AG04449 (cell line): ENCODE measurements at regions of chr12 and their contacts with region 1.

Region 1: DNA sequence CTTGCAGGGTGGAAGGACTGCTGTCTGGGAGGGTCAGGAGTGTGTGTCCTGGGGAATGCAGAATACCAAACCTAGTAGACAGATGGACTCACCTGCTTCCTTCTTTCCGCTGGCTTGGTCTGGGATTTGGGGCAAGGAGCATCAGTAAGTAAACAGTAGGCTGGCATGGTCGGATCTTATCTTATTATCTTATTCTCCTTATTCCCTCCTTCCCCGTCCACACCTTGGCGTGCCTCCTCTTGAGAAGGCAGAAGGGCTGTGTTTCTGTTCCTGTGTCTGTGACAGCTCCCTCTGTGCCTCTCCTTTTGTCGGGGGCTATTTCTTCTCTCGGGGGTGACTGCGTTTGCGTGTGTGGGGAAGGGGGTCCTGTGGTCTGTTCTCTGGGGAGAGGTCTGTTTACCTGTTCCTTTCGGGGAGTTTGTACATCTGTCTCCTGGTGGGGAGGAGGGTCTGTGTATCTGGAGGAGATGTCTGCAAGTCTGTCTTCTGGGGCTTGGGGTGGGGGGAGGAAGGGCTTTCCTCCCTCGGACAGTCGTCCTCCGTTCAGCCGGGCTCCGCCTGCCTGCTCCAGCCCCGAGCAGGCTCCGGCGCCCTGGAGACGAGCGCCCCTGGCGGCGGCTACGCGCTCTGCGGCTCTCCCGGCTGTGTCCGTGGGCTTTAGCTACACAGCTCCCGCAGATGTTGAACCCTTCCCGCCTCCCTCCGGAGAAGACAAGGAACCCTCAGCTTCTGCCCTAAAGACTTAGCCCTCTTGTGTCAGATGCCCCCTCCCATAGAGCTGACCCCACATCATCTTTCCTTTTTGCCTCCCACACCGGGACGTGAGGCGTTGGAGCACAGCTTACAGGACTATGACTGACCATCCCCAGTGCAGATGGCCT is 4.3 kb downstream of the KRT86 start:
- DNase-seq: no peak
- H3K4me3 ChIP-seq: peak overlapping the region; percentile 13; the same call in 1 of the 2 replicates
- CTCF ChIP-seq: peak; percentile 100

Region 2: DNA sequence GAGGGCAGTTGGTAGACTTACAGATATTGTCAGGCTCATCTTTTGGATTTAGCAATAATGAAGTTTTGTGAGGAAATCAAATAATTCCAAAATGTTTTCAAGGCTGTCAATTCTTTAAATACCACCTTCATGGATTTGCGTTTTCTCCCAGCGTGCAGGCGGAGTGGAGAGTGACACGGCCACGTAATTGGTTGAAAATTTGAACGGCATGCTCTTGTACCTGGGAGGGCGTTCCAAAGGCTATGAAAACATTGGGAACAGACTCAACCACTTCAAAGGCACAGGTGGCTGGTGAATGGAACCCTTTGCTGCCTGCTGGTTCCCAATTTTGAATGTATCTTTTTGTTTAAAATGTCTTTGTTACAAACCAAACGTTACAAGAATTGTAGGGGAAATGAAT is 186.9 kb before region 1 on chr12:
- CTCF ChIA-PET with region 1: no interaction called
- POLR2A ChIA-PET with region 1: no interaction called
- DNase-seq: no peak
- H3K4me3 ChIP-seq: no peak overlapping the region
- CTCF ChIP-seq: no peak

Region 3: DNA sequence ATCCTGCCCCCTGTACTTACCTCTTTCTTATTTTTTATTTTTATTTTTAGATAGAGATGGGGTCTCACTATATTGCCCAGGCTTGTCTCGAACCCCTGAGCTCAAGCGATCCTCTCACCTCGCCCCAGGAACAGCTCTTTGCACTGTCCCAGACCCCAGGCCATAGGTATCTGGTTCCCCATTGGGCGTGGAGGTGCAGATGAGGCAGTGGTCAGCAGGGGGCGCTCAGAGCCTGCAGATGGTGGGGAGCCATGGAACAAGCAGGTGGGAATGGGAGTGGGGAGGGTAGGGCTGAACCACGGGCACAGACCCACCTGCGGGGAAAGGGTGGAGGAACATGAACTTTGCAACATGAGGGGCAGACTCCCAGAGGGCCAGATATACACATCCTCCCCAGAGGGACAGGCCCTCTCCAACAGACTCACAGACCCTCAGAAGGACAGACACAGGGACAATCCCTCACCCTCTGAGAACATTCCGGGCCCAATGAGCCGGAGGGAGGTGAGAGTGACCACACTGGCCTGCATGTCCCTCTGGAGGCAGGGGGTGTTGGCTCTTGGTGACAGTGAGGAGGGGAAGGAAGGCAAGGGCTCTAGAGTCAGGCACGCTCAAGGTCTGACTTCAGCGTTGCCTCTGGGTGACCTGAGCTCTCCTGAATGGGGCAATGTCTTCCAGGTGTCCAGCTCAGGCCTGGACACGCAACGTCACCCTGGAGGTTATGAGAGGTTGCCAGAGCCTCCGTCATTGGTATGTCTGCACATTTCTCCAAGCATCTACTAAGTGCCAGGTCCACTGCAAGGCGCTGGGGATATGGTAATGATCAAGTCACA is 121.8 kb before region 1 on chr12:
- CTCF ChIA-PET with region 1: interaction called, 27 read pairs
- POLR2A ChIA-PET with region 1: no interaction called
- DNase-seq: no peak
- H3K4me3 ChIP-seq: no peak overlapping the region
- CTCF ChIP-seq: peak; percentile 97

Region 4: DNA sequence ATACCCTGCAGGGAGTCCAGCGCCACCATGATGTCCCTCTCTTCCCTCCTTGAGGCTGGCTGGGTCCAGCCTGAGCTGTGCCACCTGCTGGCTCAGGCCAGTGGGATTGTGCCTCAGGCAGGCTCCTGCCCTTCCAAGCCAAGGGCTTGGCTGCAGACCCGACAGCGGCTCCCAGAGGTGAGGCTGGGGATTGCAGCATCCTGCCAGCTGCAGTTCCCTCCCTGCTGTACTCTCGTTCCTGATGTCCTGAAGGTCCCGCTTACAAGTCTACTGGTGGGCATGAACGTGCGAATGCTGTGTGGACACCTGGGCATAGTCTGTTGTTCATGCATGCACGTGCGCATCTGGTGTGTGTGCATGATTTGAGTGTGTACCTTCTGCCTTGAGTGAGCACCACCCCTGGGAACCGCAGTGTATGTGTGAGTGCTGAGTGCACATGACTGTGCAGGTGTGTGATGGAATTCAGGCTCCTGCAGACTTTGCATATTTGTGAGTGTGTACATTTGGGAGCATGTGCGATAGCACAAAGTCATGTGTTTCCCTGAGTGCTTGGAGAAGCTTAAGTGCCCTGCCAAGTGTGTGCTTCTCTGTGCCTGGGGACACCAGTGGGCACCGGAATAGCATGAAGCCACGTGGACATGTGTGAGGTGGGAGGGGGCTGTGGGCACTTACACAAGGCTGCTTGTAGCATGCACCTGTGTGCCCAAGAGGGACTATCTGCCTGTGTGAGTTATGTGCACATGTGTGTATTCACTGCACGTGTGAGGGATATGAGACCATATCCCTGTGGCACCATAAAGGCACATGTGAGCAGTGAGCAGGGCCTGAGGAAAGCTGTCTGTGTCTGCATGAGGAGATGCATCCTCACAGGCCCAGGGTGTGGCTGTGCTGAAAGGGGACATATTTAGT is 65.0 kb before region 1 on chr12:
- CTCF ChIA-PET with region 1: interaction called, 34 read pairs
- POLR2A ChIA-PET with region 1: no interaction called
- DNase-seq: no peak
- H3K4me3 ChIP-seq: no peak overlapping the region
- CTCF ChIP-seq: peak; percentile 100

Region 5: GRCh38 chr12:52235822-52236692 is 42.7 kb before region 1 on chr12:
- CTCF ChIA-PET with region 1: interaction called, 128 read pairs
- POLR2A ChIA-PET with region 1: interaction called, 3 read pairs
- DNase-seq: no peak
- H3K4me3 ChIP-seq: no peak overlapping the region
- CTCF ChIP-seq: no peak

Region 6: DNA sequence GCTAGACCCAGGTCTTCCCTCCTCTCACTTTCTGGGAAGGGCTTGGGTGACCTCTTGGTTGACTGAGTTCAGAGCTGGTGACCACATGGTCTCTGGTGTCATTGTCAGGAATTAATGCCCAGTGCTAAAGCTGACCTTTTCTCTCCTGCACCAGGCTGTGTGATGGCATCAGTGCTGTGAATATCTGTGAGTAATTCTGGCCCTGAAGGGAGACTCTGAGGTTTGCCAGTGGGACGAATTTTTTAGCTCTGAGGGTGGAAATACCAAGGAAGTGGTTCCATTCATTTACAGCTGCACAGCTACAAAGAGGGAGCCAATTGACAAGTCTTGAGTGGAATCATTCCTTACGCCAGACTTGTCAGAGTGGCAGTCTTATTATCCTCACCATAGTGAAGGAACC is 10.6 kb before region 1 on chr12:
- CTCF ChIA-PET with region 1: interaction called, 146 read pairs
- POLR2A ChIA-PET with region 1: interaction called, 3 read pairs
- DNase-seq: no peak
- H3K4me3 ChIP-seq: no peak overlapping the region
- CTCF ChIP-seq: no peak

Region 7: GRCh38 chr12:52327052-52327829 is 48.5 kb after region 1 on chr12:
- CTCF ChIA-PET with region 1: interaction called, 100 read pairs
- POLR2A ChIA-PET with region 1: no interaction called
- DNase-seq: peak; percentile 55
- H3K4me3 ChIP-seq: no peak overlapping the region
- CTCF ChIP-seq: peak; percentile 98